Activated CD4-positive, alpha-beta T cell treated with anti-CD3 and anti-CD28 coated beads for 36 hours (primary cell): ENCODE measurements at regions of chr10 and their contacts with region 1.

Region 1: GRCh38 chr10:6202684-6203330 is at the start of gene PFKFB3:
- DNase-seq: peak; percentile 98
- ATAC-seq: peak; percentile 64
- H3K4me3 Mint-ChIP-seq: peak within 1 kb of the TSS; percentile 89
- H3K27ac Mint-ChIP-seq: peak within 1 kb of the TSS; percentile 95
- H3K4me1 Mint-ChIP-seq: peaks cover 43% of the 10 kb centered on the region
- H3K27me3 Mint-ChIP-seq: no peaks in the 10 kb centered on the region
- total RNA-seq, gene PFKFB3: 133 to 183 TPM

Region 2: GRCh38 chr10:4656576-4657182 is 1546.1 kb before region 1 on chr10:
- CTCF ChIA-PET with region 1: no interaction called
- POLR2A ChIA-PET with region 1: no interaction called
- intact Hi-C with region 1: no loop called
- DNase-seq: peak; percentile 65
- ATAC-seq: no peak
- H3K4me3 Mint-ChIP-seq: no peak overlapping the region
- H3K27ac Mint-ChIP-seq: no peak overlapping the region
- H3K4me1 Mint-ChIP-seq: peaks cover 21% of the 10 kb centered on the region
- H3K27me3 Mint-ChIP-seq: peaks cover 9% of the 10 kb centered on the region

Region 3: DNA sequence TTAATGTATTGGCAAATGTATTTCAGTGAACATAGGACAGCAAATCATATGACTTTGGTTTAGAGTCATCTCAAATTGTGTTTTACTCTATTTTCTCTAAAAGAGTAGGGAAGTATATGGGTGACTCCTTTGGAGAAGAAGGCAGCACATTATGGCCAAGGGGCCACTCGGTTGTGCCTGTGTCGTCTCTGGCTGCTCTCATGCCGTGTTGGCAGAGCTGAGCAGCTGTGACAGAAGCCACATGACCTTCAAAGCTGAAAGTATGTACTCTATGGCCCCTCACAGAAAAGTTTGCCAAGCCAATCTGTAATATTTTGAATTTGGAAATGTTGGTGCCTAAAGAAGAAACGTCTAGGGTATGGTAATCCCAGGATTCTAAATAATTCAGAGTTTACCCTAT is 470.7 kb before region 1 on chr10:
- CTCF ChIA-PET with region 1: no interaction called
- POLR2A ChIA-PET with region 1: no interaction called
- intact Hi-C with region 1: no loop called
- DNase-seq: no peak
- ATAC-seq: no peak
- H3K4me3 Mint-ChIP-seq: no peak overlapping the region
- H3K27ac Mint-ChIP-seq: no peak overlapping the region
- H3K4me1 Mint-ChIP-seq: peaks cover 22% of the 10 kb centered on the region
- H3K27me3 Mint-ChIP-seq: no peaks in the 10 kb centered on the region

Region 4: GRCh38 chr10:5889624-5890451 is 313.0 kb before region 1 on chr10 and contains the starts of genes ANKRD16 and FBH1:
- CTCF ChIA-PET with region 1: no interaction called
- POLR2A ChIA-PET with region 1: interaction called, 3 read pairs
- intact Hi-C with region 1: loop called in 1 of 2 experiments (anchors 2 kb)
- DNase-seq: peak; percentile 99
- ATAC-seq: peak; percentile 87
- H3K4me3 Mint-ChIP-seq: peak within 1 kb of the TSS; percentile 90
- H3K27ac Mint-ChIP-seq: peak within 1 kb of the TSS; percentile 84
- H3K4me1 Mint-ChIP-seq: peaks cover 53% of the 10 kb centered on the region
- H3K27me3 Mint-ChIP-seq: no peaks in the 10 kb centered on the region
- total RNA-seq, gene ANKRD16: 7.5 to 8.3 TPM
- total RNA-seq, gene FBH1: 53.3 to 56.2 TPM

Region 5: GRCh38 chr10:6108603-6109443 is 94.0 kb before region 1 on chr10:
- CTCF ChIA-PET with region 1: interaction called, 9 read pairs
- POLR2A ChIA-PET with region 1: interaction called, 4 read pairs
- intact Hi-C with region 1: loop called (anchors 1 kb)
- DNase-seq: peak; percentile 45
- ATAC-seq: peak; percentile 63
- H3K4me3 Mint-ChIP-seq: no peak overlapping the region
- H3K27ac Mint-ChIP-seq: peak overlapping the region; percentile 89
- H3K4me1 Mint-ChIP-seq: peaks cover 31% of the 10 kb centered on the region
- H3K27me3 Mint-ChIP-seq: no peaks in the 10 kb centered on the region

Region 6: DNA sequence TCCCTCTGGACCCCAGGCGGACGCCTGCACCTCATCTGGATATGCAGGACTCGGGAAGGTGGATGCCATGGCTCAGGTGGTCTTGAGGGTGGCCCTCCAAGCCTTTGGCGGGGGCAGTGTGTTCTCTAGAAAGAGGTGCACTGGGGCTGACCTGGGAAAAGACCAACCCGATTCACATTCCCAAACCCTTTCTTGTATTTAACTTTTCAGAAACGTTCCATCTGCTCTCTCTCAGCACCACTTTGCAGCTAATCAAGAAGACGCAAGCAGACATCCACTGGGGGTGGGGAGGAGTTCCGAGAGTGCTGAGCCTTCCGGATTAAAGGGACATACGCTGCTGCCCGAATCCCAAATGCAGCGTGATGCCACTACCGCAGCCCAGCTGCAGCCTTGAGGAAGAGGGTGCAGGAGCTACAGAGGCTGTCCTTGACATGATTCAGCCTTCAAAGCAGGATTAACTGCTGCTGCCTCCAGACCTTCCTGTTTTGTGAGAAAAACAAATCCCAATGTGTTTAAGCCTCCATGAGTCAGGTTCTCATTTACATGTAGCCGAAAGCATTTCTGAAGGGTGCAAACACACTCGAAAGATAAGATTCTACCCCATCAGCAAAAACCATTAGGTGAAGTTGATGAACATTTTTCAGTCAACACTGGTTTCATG is 74.1 kb before region 1 on chr10:
- CTCF ChIA-PET with region 1: no interaction called
- POLR2A ChIA-PET with region 1: no interaction called
- intact Hi-C with region 1: no loop called
- DNase-seq: no peak
- ATAC-seq: no peak
- H3K4me3 Mint-ChIP-seq: no peak overlapping the region
- H3K27ac Mint-ChIP-seq: peak overlapping the region; percentile 82
- H3K4me1 Mint-ChIP-seq: peaks cover 44% of the 10 kb centered on the region
- H3K27me3 Mint-ChIP-seq: no peaks in the 10 kb centered on the region

Region 7: GRCh38 chr10:6163364-6164270 is 39.2 kb before region 1 on chr10:
- CTCF ChIA-PET with region 1: interaction called, 13 read pairs
- POLR2A ChIA-PET with region 1: interaction called, 10 read pairs
- intact Hi-C with region 1: loop called (anchors 1 kb)
- DNase-seq: peak; percentile 94
- ATAC-seq: peak; percentile 92
- H3K4me3 Mint-ChIP-seq: peak overlapping the region; percentile 92
- H3K27ac Mint-ChIP-seq: peak overlapping the region; percentile 95
- H3K4me1 Mint-ChIP-seq: peaks cover 67% of the 10 kb centered on the region
- H3K27me3 Mint-ChIP-seq: no peaks in the 10 kb centered on the region

Region 8: DNA sequence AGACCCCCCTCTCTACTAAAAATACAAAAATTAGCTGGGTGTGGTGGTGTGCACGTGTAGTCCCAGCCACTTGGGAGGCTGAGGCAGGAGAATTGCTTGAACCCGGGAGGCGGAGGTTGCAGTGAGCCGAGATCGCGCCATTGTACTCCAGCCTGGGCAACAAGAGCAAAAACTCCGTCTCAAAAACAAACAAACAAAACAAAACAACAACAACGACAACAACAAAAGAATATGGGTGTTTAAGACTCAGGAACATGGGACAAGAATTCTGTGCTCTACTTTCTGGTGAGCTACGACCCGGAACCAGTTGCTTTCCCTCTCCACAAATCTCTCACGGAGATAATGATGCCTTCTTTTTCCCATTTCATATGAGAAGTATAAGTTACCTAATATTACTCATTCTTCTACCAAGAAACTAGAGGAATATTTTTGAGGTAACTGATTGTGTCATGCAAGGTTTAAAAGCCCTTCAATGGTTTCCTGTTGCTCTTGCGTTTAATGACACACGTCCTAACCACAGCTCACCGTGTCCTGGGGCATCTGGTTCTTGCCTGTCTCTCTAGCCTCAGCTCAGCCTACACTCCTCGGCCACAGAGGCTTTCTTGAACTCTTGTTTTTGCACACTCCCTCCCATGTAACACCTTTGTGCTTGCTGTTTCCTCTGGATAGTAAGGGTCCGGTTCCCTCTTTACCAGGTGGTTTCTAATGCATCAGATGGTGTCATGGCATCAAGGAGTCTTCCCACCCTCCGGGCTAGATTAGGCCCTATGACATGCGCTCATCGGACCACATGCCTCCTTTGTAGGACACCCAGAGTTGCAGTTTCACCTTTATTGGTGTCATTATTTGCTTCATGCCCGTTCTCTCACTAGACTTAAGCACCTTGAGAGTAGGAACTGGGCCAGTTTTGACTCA is 67.4 kb after region 1 on chr10:
- CTCF ChIA-PET with region 1: interaction called, 5 read pairs
- POLR2A ChIA-PET with region 1: interaction called, 11 read pairs
- intact Hi-C with region 1: loop called (anchors 1 to 2 kb)
- DNase-seq: peak; percentile 90
- ATAC-seq: peak; percentile 72
- H3K4me3 Mint-ChIP-seq: peak overlapping the region; percentile 25
- H3K27ac Mint-ChIP-seq: peak overlapping the region; percentile 92
- H3K4me1 Mint-ChIP-seq: peaks cover 73% of the 10 kb centered on the region
- H3K27me3 Mint-ChIP-seq: no peaks in the 10 kb centered on the region

Region 9: DNA sequence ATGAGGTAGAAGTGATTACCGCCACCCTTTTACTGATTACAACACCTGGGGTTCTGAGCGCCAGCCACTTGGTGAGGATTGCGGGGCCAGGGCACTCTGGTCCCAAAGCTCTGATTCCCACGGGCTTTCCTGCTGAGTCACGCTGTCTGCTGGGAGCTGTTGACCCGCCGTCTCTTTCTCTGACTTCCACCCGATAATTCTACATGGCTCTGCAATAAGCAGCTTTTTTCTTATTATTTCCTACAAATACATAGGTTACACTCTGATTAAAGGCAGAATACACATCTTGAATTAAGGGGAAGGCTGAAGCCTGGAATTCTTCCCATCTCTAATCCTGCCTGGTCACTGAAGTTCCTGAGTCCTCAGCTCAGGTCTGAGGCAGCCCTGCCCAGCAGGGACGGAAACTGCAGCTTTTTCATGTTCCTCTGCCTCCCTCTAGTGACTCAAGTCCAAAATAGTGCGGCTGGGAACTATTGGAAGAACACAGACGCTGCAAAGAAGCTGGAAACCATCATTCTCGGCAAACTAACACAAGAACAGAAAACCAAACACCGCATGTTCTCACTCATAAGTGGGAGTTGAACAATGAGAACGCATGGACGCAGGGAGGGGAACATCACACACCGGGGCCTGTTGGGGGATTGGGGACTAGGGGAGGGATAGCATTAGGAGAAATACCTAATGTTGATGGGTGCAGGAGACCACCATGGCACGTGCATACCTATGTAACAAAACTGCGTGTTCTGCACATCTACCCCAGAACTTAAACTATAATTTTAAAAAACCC is 198.9 kb after region 1 on chr10:
- CTCF ChIA-PET with region 1: interaction called, 77 read pairs
- POLR2A ChIA-PET with region 1: interaction called, 15 read pairs
- intact Hi-C with region 1: loop called (anchors 1 kb)
- DNase-seq: peak; percentile 76
- ATAC-seq: peak; percentile 89
- H3K4me3 Mint-ChIP-seq: peak overlapping the region; percentile 56
- H3K27ac Mint-ChIP-seq: peak overlapping the region; percentile 78
- H3K4me1 Mint-ChIP-seq: peaks cover 49% of the 10 kb centered on the region
- H3K27me3 Mint-ChIP-seq: peaks cover 11% of the 10 kb centered on the region